Vagina (tissue), 2 donors: ENCODE measurements at regions of chr1 and their contacts with region 1.

Region 1: GRCh38 chr1:215597961-215598360 is 30.9 kb downstream of the KCTD3 start:
- DNase-seq: no peak
- H3K4me3 ChIP-seq: no peak overlapping the region
- H3K27ac ChIP-seq: no peak overlapping the region
- H3K4me1 ChIP-seq: peaks cover 23% of the 10 kb centered on the region
- H3K27me3 ChIP-seq: no peaks in the 10 kb centered on the region
- CTCF ChIP-seq: no peak
- POLR2A ChIP-seq: no peak

Region 2: GRCh38 chr1:215617979-215618378 is 20.0 kb after region 1 on chr1:
- intact Hi-C with region 1: loop called (anchors 1 kb)
- DNase-seq: no peak
- H3K4me3 ChIP-seq: no peak overlapping the region
- H3K27ac ChIP-seq: no peak overlapping the region
- H3K4me1 ChIP-seq: no peaks in the 10 kb centered on the region
- H3K27me3 ChIP-seq: no peaks in the 10 kb centered on the region
- CTCF ChIP-seq: no peak
- POLR2A ChIP-seq: no peak